Caco-2 (cell line): ENCODE measurements at regions of chr4 and their contacts with region 1.

Region 1: DNA sequence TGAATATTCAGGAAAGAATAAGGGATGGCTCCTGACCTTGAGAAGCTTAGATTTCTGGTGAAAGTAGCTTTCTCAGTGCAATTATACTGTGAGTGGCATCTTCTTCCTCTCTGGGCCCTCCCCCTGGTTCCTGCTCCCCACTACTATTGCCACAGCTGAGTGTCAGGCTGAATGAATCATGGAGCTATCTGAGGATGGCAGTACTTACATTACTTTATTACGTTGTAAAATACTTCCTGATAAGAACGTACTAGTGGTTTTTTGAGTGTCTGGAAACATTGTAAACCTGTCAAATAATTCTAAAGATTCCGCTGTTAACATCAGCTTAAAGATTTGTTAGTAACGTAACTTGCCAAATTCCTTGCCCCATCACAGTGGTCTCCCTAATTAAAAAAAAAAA is 36.2 kb downstream of the ARHGAP10 start:
- DNase-seq: peak; percentile 47 to 61
- H3K4me3 ChIP-seq: no peak overlapping the region
- H3K4me3 Mint-ChIP-seq: no peak overlapping the region
- H3K27ac Mint-ChIP-seq: no peak overlapping the region
- H3K4me1 ChIP-seq: peaks cover 36% of the 10 kb centered on the region
- H3K4me1 Mint-ChIP-seq: peaks cover 23% of the 10 kb centered on the region
- H3K27me3 ChIP-seq: no peaks in the 10 kb centered on the region
- H3K27me3 Mint-ChIP-seq: no peaks in the 10 kb centered on the region
- CTCF ChIP-seq: no peak

Region 2: GRCh38 chr4:147633113-147633512 is 135.0 kb before region 1 on chr4:
- CTCF ChIA-PET with region 1: no interaction called
- POLR2A ChIA-PET with region 1: no interaction called
- intact Hi-C with region 1: no loop called
- DNase-seq: no peak
- H3K4me3 ChIP-seq: no peak overlapping the region
- H3K4me3 Mint-ChIP-seq: no peak overlapping the region
- H3K27ac Mint-ChIP-seq: no peak overlapping the region
- H3K4me1 ChIP-seq: no peaks in the 10 kb centered on the region
- H3K4me1 Mint-ChIP-seq: no peaks in the 10 kb centered on the region
- H3K27me3 ChIP-seq: no peaks in the 10 kb centered on the region
- H3K27me3 Mint-ChIP-seq: no peaks in the 10 kb centered on the region
- CTCF ChIP-seq: no peak

Region 3: GRCh38 chr4:147786031-147786430 is 17.9 kb after region 1 on chr4:
- CTCF ChIA-PET with region 1: interaction called, 3 read pairs
- POLR2A ChIA-PET with region 1: no interaction called
- intact Hi-C with region 1: loop called (anchors 2 kb)
- DNase-seq: no peak
- H3K4me3 ChIP-seq: no peak overlapping the region
- H3K4me3 Mint-ChIP-seq: no peak overlapping the region
- H3K27ac Mint-ChIP-seq: no peak overlapping the region
- H3K4me1 ChIP-seq: peaks cover 54% of the 10 kb centered on the region
- H3K4me1 Mint-ChIP-seq: peaks cover 29% of the 10 kb centered on the region
- H3K27me3 ChIP-seq: no peaks in the 10 kb centered on the region
- H3K27me3 Mint-ChIP-seq: no peaks in the 10 kb centered on the region
- CTCF ChIP-seq: no peak

Region 4: DNA sequence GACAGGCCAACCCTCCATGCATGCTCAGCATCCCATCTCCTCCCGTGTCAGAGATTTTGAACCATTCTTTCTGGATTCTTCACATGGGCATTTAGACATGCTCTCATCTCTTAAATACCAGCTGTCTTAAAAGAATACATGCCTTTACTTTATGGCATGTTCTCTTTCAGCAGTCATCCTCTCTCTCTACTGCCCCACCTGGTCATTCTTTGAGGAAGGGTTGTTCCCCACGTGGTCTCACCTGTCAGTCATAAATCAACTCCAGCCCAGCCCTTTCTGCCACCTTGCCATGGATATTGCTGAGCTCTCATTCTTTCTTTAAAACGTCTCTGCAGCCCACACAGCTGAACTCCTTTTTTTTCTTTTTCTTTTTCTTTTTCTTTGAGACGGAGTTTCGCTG is 75.0 kb after region 1 on chr4:
- CTCF ChIA-PET with region 1: no interaction called
- POLR2A ChIA-PET with region 1: no interaction called
- intact Hi-C with region 1: loop called (anchors 5 kb)
- DNase-seq: peak; percentile 57 to 66
- H3K4me3 ChIP-seq: no peak overlapping the region
- H3K4me3 Mint-ChIP-seq: no peak overlapping the region
- H3K27ac Mint-ChIP-seq: no peak overlapping the region
- H3K4me1 ChIP-seq: peaks cover 19% of the 10 kb centered on the region
- H3K4me1 Mint-ChIP-seq: peaks cover 10% of the 10 kb centered on the region
- H3K27me3 ChIP-seq: no peaks in the 10 kb centered on the region
- H3K27me3 Mint-ChIP-seq: no peaks in the 10 kb centered on the region
- CTCF ChIP-seq: peak in 1 of 2 experiments; percentile 30

Region 5: DNA sequence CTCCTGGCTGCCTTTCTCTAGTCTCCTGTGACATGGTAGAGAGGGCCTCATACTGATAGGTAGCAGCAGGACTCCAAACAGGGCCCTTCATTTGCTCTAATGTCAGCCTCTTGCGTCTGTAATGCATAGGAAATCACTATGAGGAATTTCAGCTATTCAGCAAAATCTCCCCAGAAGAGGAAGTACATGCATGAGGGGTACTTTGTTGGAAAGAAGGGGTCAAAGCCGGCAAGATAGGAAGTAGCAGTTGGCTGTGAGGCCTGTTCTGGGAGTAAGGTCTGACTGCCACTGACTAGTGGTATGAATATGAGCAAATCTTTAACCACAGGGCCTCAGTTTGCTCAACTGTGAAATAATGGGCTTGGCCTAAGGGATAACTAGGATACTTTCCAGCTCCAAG is 246.9 kb after region 1 on chr4:
- CTCF ChIA-PET with region 1: no interaction called
- POLR2A ChIA-PET with region 1: no interaction called
- intact Hi-C with region 1: no loop called
- DNase-seq: no peak
- H3K4me3 ChIP-seq: no peak overlapping the region
- H3K4me3 Mint-ChIP-seq: no peak overlapping the region
- H3K27ac Mint-ChIP-seq: peak overlapping the region; percentile 22
- H3K4me1 ChIP-seq: peaks cover 25% of the 10 kb centered on the region
- H3K4me1 Mint-ChIP-seq: peaks cover 14% of the 10 kb centered on the region
- H3K27me3 ChIP-seq: no peaks in the 10 kb centered on the region
- H3K27me3 Mint-ChIP-seq: no peaks in the 10 kb centered on the region
- CTCF ChIP-seq: no peak